B cell (primary cell): ENCODE measurements at regions of chr17 and their contacts with region 1.

Region 1: GRCh38 chr17:19377602-19378392 is 501 bp upstream of the MAPK7 start:
- DNase-seq: peak; percentile 98
- ATAC-seq: peak; percentile 93
- H3K4me3 ChIP-seq: peak overlapping the region; percentile 77 to 96 (median 91)
- H3K4me3 Mint-ChIP-seq: peak overlapping the region; percentile 99
- H3K27ac ChIP-seq: peak overlapping the region; percentile 86 to 95
- H3K27ac Mint-ChIP-seq: peak overlapping the region; percentile 99
- H3K4me1 ChIP-seq: peaks cover 16 to 24% of the 10 kb centered on the region in 2 donors
- H3K4me1 Mint-ChIP-seq: peaks cover 31% of the 10 kb centered on the region
- H3K27me3 ChIP-seq: no peaks in the 10 kb centered on the region
- H3K27me3 Mint-ChIP-seq: no peaks in the 10 kb centered on the region
- CTCF ChIP-seq: no peak

Region 2: DNA sequence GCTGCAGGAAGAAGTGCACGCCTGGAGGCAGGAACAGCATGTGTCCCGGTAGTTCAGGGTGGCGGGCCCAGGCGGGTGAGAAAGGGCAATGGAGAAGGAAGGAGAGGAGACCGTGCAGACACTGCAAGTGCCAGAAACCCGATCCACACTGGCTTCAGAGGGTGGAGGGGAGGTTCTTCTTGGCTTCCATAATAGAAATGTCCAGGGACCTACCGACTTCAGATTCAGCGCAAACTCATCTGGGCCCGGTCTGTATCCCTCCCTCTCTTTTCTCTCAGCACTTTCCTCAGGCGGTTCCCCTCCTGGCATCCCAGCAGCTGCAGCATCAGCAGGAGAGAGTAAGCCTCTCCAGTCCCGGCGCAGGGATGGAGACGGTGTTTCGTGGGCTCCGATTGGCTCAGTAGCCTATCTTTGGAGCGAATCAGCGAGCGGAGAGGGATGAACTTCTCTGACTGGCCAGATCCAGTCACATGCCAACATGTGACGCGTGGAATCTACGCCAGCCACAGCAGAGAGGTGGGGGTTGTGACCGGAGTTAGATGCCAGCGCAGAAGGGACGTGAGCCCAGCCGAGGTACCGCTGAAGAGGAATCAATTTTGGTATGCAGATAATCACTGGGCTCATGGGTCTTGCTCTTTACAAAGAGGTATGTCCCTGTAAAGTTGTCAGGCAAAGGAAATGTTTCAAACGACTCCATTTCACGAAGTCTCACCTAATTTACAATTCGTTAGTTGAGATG is 521.8 kb before region 1 on chr17:
- CTCF ChIA-PET with region 1: no interaction called
- POLR2A ChIA-PET with region 1: interaction called, 6 read pairs
- intact Hi-C with region 1: loop called (anchors 10 kb)
- DNase-seq: peak; percentile 91
- ATAC-seq: peak; percentile 78
- H3K4me3 ChIP-seq: peak overlapping the region; percentile 60 to 88 (median 76)
- H3K4me3 Mint-ChIP-seq: peak overlapping the region; percentile 92
- H3K27ac ChIP-seq: peak overlapping the region; percentile 68 to 79
- H3K27ac Mint-ChIP-seq: peak overlapping the region; percentile 93
- H3K4me1 ChIP-seq: peaks cover 34 to 49% of the 10 kb centered on the region in 2 donors
- H3K4me1 Mint-ChIP-seq: peaks cover 44% of the 10 kb centered on the region
- H3K27me3 ChIP-seq: no peaks in the 10 kb centered on the region
- H3K27me3 Mint-ChIP-seq: no peaks in the 10 kb centered on the region
- CTCF ChIP-seq: no peak

Region 3: DNA sequence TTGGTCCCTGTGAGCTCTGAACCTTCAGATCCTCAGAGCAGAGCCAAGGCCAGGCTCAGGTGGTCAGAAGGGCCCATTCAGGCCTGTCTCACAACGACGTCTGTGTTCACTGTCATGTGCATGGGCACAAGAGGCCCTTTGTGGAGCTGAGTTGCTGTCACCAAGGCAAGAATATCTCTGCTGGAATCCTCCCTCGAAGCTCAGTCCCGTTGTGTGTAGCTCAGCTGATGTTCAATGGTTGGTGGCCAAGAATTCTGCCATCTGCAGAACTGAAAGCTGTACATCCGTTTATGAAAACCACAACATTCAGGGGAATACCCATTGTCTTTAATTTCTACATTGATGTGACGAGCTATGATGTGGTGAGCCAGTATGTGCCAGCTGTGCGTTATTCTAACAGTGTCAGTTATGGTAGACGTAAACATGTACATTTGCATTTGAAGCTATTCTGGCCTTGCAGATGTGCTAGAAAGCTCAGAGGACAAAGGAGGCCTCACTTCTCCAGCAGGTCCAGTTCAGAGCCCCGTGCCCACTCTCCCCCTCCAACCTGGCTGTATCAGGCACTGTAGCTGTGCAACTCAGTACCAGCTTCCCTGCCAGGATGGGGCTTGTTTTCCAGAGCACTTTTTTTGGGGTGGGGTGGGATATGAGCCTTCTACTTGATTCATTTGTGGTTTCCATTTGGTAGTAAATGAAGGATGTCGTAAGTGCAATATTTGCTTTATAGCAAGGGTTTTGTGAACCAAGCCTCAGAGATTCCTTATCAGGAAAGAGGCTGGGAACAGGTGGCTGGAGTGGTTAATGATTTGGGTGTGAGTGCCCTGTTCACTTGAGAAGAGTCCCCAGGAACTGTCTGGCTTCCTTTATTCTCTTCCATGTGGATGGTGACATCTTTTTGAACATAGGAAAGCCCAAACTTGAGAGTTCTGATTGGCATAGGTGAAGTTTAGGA is 71.4 kb before region 1 on chr17:
- CTCF ChIA-PET with region 1: interaction called, 5 read pairs
- POLR2A ChIA-PET with region 1: no interaction called
- intact Hi-C with region 1: loop called (anchors 5 kb)
- DNase-seq: peak; percentile 93
- ATAC-seq: peak; percentile 86
- H3K4me3 ChIP-seq: peak overlapping the region in 1 of 5 experiments; percentile 16
- H3K4me3 Mint-ChIP-seq: peak overlapping the region; percentile 75
- H3K27ac ChIP-seq: peak overlapping the region; percentile 41 to 48
- H3K27ac Mint-ChIP-seq: peak overlapping the region; percentile 81
- H3K4me1 ChIP-seq: peaks cover 68 to 69% of the 10 kb centered on the region in 2 donors
- H3K4me1 Mint-ChIP-seq: peaks cover 67% of the 10 kb centered on the region
- H3K27me3 ChIP-seq: peaks cover 0 to 25% (median 3%) of the 10 kb centered on the region in 4 experiments
- H3K27me3 Mint-ChIP-seq: no peaks in the 10 kb centered on the region
- CTCF ChIP-seq: no peak

Region 4: GRCh38 chr17:19338031-19338990 is 39.5 kb before region 1 on chr17:
- CTCF ChIA-PET with region 1: interaction called, 10 read pairs
- POLR2A ChIA-PET with region 1: no interaction called
- intact Hi-C with region 1: no loop called
- DNase-seq: peak; percentile 86
- ATAC-seq: peak; percentile 98
- H3K4me3 ChIP-seq: no peak overlapping the region
- H3K4me3 Mint-ChIP-seq: no peak overlapping the region
- H3K27ac ChIP-seq: no peak overlapping the region
- H3K27ac Mint-ChIP-seq: no peak overlapping the region
- H3K4me1 ChIP-seq: peaks cover 0 to 3% of the 10 kb centered on the region in 2 donors
- H3K4me1 Mint-ChIP-seq: no peaks in the 10 kb centered on the region
- H3K27me3 ChIP-seq: peaks cover 0 to 3% (median 0%) of the 10 kb centered on the region in 4 experiments
- H3K27me3 Mint-ChIP-seq: peaks cover 15% of the 10 kb centered on the region
- CTCF ChIP-seq: peak; percentile 88

Region 5: GRCh38 chr17:19447085-19447583 is 69.3 kb after region 1 on chr17:
- CTCF ChIA-PET with region 1: interaction called, 20 read pairs
- POLR2A ChIA-PET with region 1: no interaction called
- intact Hi-C with region 1: no loop called
- DNase-seq: peak; percentile 80
- ATAC-seq: peak; percentile 71
- H3K4me3 ChIP-seq: no peak overlapping the region
- H3K4me3 Mint-ChIP-seq: no peak overlapping the region
- H3K27ac ChIP-seq: no peak overlapping the region
- H3K27ac Mint-ChIP-seq: no peak overlapping the region
- H3K4me1 ChIP-seq: no peaks in the 10 kb centered on the region
- H3K4me1 Mint-ChIP-seq: no peaks in the 10 kb centered on the region
- H3K27me3 ChIP-seq: peaks cover 0 to 15% (median 5%) of the 10 kb centered on the region in 4 experiments
- H3K27me3 Mint-ChIP-seq: peaks cover 22% of the 10 kb centered on the region
- CTCF ChIP-seq: peak; percentile 92

Region 6: DNA sequence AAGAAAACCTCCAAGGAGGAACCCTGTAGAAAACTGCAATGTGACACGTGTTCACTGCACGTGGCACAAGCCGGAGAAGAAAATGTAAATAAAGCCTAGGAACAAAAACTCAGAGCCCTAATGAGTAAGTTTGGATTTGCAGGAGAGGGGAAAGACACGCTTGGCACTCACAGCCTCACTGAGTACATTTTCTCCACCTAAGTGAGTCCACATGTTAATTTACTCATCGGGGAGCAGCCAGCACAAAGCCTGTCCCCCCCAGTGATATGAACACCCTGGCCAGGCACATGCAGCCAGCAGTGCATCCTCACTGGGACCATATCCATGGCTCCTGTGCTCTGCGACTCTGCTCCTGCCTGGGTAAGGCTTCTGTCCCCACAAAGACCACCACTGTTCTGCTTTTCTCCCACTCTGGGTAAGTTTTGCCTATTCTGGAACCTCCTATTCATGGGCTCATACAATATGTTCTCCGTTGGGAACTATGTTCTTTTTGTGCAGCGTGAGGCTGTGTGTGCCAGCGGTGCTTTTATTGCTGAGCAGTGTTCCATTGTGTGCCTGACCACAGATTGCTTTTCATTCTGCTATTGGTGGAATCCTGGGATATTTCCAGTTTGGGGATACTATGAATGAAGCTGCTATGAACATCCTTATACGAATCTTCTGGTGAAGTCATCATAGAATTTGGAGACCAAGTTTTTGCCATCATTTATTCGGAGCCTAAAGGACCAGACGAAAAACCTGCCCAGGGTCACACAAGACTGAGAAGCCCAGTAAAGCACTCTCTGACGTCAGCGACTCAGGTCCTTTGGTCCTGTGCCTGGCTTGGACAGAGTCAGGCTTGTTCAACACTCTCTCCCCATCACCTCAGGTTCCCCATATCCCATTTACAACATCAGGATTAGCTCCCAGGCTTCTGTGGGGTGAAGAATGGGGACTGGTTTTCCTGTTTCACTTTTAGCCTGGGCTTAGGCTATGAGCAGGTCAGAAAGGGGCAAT is 86.5 kb after region 1 on chr17:
- CTCF ChIA-PET with region 1: interaction called, 4 read pairs
- POLR2A ChIA-PET with region 1: interaction called, 10 read pairs
- intact Hi-C with region 1: loop called (anchors 1 kb)
- DNase-seq: no peak
- ATAC-seq: no peak
- H3K4me3 ChIP-seq: peak overlapping the region in 1 of 5 experiments; percentile 25
- H3K4me3 Mint-ChIP-seq: peak overlapping the region; percentile 74
- H3K27ac ChIP-seq: peak overlapping the region; percentile 78 to 86
- H3K27ac Mint-ChIP-seq: peak overlapping the region; percentile 91
- H3K4me1 ChIP-seq: peaks cover 47 to 54% of the 10 kb centered on the region in 2 donors
- H3K4me1 Mint-ChIP-seq: peaks cover 48% of the 10 kb centered on the region
- H3K27me3 ChIP-seq: no peaks in the 10 kb centered on the region
- H3K27me3 Mint-ChIP-seq: no peaks in the 10 kb centered on the region
- CTCF ChIP-seq: no peak

Region 7: GRCh38 chr17:19507775-19508576 is 130.2 kb after region 1 on chr17:
- CTCF ChIA-PET with region 1: interaction called, 6 read pairs
- POLR2A ChIA-PET with region 1: interaction called, 5 read pairs
- intact Hi-C with region 1: loop called (anchors 1 kb)
- DNase-seq: peak; percentile 90
- ATAC-seq: peak; percentile 75
- H3K4me3 ChIP-seq: peak overlapping the region; percentile 57 to 98 (median 89)
- H3K4me3 Mint-ChIP-seq: peak overlapping the region; percentile 90
- H3K27ac ChIP-seq: peak overlapping the region; percentile 31 to 66
- H3K27ac Mint-ChIP-seq: peak overlapping the region; percentile 97
- H3K4me1 ChIP-seq: peaks cover 5 to 9% of the 10 kb centered on the region in 2 donors
- H3K4me1 Mint-ChIP-seq: peaks cover 9% of the 10 kb centered on the region
- H3K27me3 ChIP-seq: no peaks in the 10 kb centered on the region
- H3K27me3 Mint-ChIP-seq: no peaks in the 10 kb centered on the region
- CTCF ChIP-seq: no peak